ENCODE measurements at regions of chr5 and their contacts with region 1.

Region 1: DNA sequence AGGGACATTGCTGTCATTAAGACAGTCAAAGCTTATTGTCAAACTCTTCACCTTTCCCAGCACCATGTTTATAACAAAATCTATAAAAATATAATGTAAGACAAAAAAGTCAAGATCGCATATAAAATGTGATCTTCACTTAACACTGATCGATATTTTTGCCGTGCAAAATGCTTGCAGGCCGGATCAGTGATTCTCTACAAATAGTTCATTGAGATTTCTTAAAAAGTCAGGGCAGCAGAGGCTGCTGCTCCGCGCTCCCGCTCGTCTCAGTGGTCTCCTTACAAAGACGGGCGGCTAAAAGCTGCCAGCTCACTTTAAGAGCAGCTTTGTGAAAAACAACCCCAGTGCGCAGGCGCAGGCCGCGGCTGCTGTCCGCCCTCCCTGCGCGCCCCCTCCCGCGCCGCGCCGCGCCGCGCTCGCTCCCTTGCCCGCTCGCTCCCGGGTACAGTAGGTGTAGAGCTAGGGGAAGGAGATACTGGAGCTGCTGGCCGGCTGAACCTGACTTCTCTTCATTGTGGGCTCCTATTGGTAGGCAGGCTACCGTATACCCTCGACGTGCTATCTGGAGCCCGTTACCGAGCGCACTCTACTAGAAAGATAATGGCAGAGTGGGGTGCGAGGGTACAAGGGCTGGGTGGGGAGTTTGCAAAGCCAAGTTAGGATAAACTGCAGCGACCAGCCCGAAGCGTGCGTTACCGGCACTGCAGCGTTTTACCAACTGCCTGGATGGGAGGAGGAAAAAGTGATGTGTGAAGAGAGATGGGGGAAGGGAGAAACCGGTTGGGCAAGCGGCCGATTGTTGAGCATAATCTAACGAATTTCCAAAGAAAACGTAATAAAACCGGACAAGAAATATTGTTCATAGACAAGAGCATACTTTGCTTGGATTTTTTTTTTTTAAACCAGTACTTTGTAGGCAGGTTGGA is at the start of gene ARRDC3:
- DNase-seq: peak; percentile 96
- H3K4me3 Mint-ChIP-seq: peak within 1 kb of the TSS; percentile 80
- H3K27ac Mint-ChIP-seq: peak within 1 kb of the TSS; percentile 99
- H3K4me1 Mint-ChIP-seq: no peaks in the 10 kb centered on the region
- H3K27me3 Mint-ChIP-seq: no peaks in the 10 kb centered on the region
- CTCF ChIP-seq: no peak
- total RNA-seq, gene ARRDC3: 35.5 and 41.6 TPM in 2 replicates

Region 2: DNA sequence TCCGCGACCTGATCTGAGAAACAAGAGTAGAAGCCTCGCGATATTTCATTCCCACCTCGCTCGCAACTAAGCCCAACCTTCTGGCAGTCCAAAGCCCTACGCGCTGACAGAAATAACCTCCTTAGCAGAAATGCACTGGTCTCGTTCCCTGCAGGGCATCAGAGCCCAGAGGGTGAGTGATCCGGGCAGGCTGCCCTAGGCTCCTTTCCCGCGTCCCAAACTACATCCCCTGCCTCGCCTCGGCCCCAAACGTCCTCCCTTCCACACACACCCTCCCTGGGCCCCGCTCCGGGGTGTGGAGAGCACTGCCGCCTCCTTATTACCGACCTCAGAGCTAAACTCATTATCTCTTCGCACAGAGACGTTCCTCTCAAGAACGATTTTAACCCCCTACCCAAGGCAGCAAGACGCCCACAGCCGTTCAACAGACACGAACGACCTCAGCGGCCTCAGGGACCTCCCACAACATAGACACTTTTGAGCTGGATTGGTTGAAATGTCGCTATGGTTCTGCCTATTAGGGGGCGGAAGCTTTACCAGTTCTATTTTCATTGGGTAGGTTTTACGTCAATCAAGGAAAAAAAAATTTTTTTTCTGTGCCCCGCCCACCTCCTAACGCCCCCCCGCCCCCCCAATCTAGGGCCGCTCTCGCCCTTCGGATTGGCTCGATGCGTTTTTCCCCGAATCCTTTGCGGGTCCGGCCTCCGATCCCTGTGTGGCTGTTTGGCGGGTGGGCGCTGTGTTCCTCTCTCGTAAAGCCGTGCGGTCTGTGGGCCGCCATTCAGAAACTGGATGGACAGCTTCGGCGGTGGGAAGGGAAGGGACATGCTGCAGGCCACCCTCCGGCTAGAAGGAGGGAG is 973.7 kb before region 1 on chr5 and contains the start of gene CETN3:
- CTCF ChIA-PET with region 1: no interaction called
- POLR2A ChIA-PET with region 1: interaction called, 14 read pairs
- intact Hi-C with region 1: no loop called
- DNase-seq: peak; percentile 95
- H3K4me3 Mint-ChIP-seq: no peak within 1 kb of the TSS
- H3K27ac Mint-ChIP-seq: no peak within 1 kb of the TSS
- H3K4me1 Mint-ChIP-seq: peaks cover 22% of the 10 kb centered on the region
- H3K27me3 Mint-ChIP-seq: no peaks in the 10 kb centered on the region
- CTCF ChIP-seq: no peak
- total RNA-seq, gene CETN3: 24.8 and 28.4 TPM in 2 replicates

Region 3: GRCh38 chr5:90888511-90889324 is 494.6 kb before region 1 on chr5:
- CTCF ChIA-PET with region 1: interaction called, 5 read pairs
- POLR2A ChIA-PET with region 1: interaction called, 26 read pairs
- intact Hi-C with region 1: no loop called
- DNase-seq: peak; percentile 86
- H3K4me3 Mint-ChIP-seq: no peak overlapping the region
- H3K27ac Mint-ChIP-seq: peak overlapping the region; percentile 46
- H3K4me1 Mint-ChIP-seq: peaks cover 25% of the 10 kb centered on the region
- H3K27me3 Mint-ChIP-seq: no peaks in the 10 kb centered on the region
- CTCF ChIP-seq: no peak

Region 4: GRCh38 chr5:91074615-91075014 is 308.7 kb before region 1 on chr5:
- CTCF ChIA-PET with region 1: interaction called, 3 read pairs
- POLR2A ChIA-PET with region 1: interaction called, 38 read pairs
- intact Hi-C with region 1: no loop called
- DNase-seq: peak; percentile 41
- H3K4me3 Mint-ChIP-seq: no peak overlapping the region
- H3K27ac Mint-ChIP-seq: peak overlapping the region; percentile 28
- H3K4me1 Mint-ChIP-seq: peaks cover 38% of the 10 kb centered on the region
- H3K27me3 Mint-ChIP-seq: no peaks in the 10 kb centered on the region
- CTCF ChIP-seq: peak; percentile 15

Region 5: GRCh38 chr5:91162534-91163381 is 220.5 kb before region 1 on chr5:
- CTCF ChIA-PET with region 1: interaction called, 3 read pairs
- POLR2A ChIA-PET with region 1: interaction called, 17 read pairs
- intact Hi-C with region 1: loop called (anchors 2 kb)
- DNase-seq: peak; percentile 96
- H3K4me3 Mint-ChIP-seq: peak overlapping the region; percentile 10
- H3K27ac Mint-ChIP-seq: peak overlapping the region; percentile 68
- H3K4me1 Mint-ChIP-seq: peaks cover 19% of the 10 kb centered on the region
- H3K27me3 Mint-ChIP-seq: no peaks in the 10 kb centered on the region
- CTCF ChIP-seq: no peak

Region 6: GRCh38 chr5:91293131-91293530 is 90.2 kb before region 1 on chr5:
- CTCF ChIA-PET with region 1: interaction called, 4 read pairs
- POLR2A ChIA-PET with region 1: interaction called, 22 read pairs
- intact Hi-C with region 1: no loop called
- DNase-seq: no peak
- H3K4me3 Mint-ChIP-seq: no peak overlapping the region
- H3K27ac Mint-ChIP-seq: no peak overlapping the region
- H3K4me1 Mint-ChIP-seq: peaks cover 17% of the 10 kb centered on the region
- H3K27me3 Mint-ChIP-seq: no peaks in the 10 kb centered on the region
- CTCF ChIP-seq: no peak

Region 7: GRCh38 chr5:91419571-91420537 is 36.6 kb after region 1 on chr5:
- CTCF ChIA-PET with region 1: interaction called, 59 read pairs
- POLR2A ChIA-PET with region 1: interaction called, 13 read pairs
- intact Hi-C with region 1: loop called (anchors 2 kb)
- DNase-seq: peak; percentile 73
- H3K4me3 Mint-ChIP-seq: no peak overlapping the region
- H3K27ac Mint-ChIP-seq: no peak overlapping the region
- H3K4me1 Mint-ChIP-seq: no peaks in the 10 kb centered on the region
- H3K27me3 Mint-ChIP-seq: no peaks in the 10 kb centered on the region
- CTCF ChIP-seq: peak; percentile 75

Region 8: GRCh38 chr5:91541696-91542095 is 158.4 kb after region 1 on chr5:
- CTCF ChIA-PET with region 1: no interaction called
- POLR2A ChIA-PET with region 1: no interaction called
- intact Hi-C with region 1: no loop called
- DNase-seq: peak; percentile 66
- H3K4me3 Mint-ChIP-seq: no peak overlapping the region
- H3K27ac Mint-ChIP-seq: no peak overlapping the region
- H3K4me1 Mint-ChIP-seq: no peaks in the 10 kb centered on the region
- H3K27me3 Mint-ChIP-seq: no peaks in the 10 kb centered on the region
- CTCF ChIP-seq: no peak

Measured in MCF 10A (cell line).